Activated T-helper 1 cell treated with anti-CD3 and anti-CD28 coated beads, Interleukin-12 subunit alpha, Interleukin-12 subunit beta, Interleukin-2, Interleukin-4 antibody, amounts not matched to agents 30 ng/mL and 10 ng/mL and 1 ng/mL, durations not matched to agents 14 hours and 24 hours and 36 hours (primary cell): ENCODE measurements at regions of chr3 and their contacts with region 1.

Region 1: DNA sequence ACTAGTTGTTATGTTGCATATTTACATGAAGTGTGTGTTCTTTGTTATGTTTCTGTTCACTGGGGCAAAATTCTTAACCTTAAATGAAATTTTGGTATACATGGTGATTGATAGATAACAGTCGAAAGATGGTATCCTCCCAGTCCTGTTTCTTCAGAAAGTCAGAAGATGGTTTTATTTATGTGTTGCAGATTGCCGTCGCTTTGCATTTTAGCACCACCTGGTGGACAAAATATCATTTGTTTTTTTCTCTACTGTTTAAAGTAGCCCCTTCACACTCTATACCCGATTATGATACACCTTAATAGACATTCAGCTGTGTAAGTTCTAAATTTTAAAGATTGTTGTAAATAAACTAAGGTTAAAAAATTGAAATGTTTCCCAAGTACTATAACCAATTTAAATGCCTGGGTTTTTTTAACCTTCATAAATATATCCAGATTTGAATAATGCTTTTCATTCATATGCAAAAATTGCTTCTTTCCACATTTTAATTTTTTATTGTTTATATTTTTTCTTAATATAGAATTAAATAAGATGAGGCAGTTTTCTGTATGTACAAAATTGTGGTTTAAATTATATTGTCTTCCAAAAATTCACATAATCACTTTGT is 152.2 kb downstream of the ALCAM start:
- DNase-seq: peak; percentile 11
- H3K4me3 Mint-ChIP-seq: no peak overlapping the region
- H3K27ac Mint-ChIP-seq: no peak overlapping the region
- H3K4me1 Mint-ChIP-seq: no peaks in the 10 kb centered on the region
- H3K27me3 Mint-ChIP-seq: no peaks in the 10 kb centered on the region

Region 2: DNA sequence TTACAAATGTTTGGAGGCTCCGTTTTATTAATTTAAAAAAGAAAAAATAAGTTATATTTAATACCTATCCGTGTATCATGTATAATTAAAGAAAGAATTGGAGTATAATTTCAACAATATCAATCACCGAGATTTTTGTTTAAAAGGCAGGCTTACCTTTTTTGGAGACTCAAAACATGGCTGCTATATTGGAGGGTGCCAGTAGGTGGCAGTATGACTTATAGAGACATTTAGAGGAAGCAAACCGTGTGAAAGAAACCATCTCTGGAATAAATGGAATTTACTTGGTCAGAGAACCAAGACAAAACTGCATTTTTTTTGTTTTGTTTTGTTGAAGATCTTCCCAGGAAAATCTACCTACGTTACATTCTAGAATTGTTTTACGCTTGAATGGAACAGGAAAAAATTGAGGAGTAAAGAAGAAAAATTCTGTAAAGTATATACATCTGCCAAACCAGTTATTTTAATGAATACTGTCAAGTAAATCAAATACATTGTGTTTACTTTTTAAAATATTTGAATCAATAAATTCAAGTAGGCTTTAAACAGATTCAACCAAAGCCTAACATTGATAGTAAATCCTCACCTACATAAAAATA is 954.8 kb before region 1 on chr3:
- intact Hi-C with region 1: loop called (anchors 2 kb)
- DNase-seq: peak; percentile 24
- H3K4me3 Mint-ChIP-seq: no peak overlapping the region
- H3K27ac Mint-ChIP-seq: no peak overlapping the region
- H3K4me1 Mint-ChIP-seq: no peaks in the 10 kb centered on the region
- H3K27me3 Mint-ChIP-seq: no peaks in the 10 kb centered on the region

Region 3: GRCh38 chr3:104596551-104596950 is 922.4 kb before region 1 on chr3:
- intact Hi-C with region 1: loop called (anchors 2 kb)
- DNase-seq: no peak
- H3K4me3 Mint-ChIP-seq: no peak overlapping the region
- H3K27ac Mint-ChIP-seq: no peak overlapping the region
- H3K4me1 Mint-ChIP-seq: no peaks in the 10 kb centered on the region
- H3K27me3 Mint-ChIP-seq: no peaks in the 10 kb centered on the region

Region 4: GRCh38 chr3:105798381-105798934 is 279.5 kb after region 1 on chr3:
- intact Hi-C with region 1: no loop called
- DNase-seq: no peak
- H3K4me3 Mint-ChIP-seq: peak overlapping the region; percentile 50
- H3K27ac Mint-ChIP-seq: peak overlapping the region; percentile 57
- H3K4me1 Mint-ChIP-seq: peaks cover 72% of the 10 kb centered on the region
- H3K27me3 Mint-ChIP-seq: no peaks in the 10 kb centered on the region

Region 5: GRCh38 chr3:107064445-107065060 is 1545.6 kb after region 1 on chr3:
- intact Hi-C with region 1: loop called (anchors 2 kb)
- DNase-seq: peak; percentile 29
- H3K4me3 Mint-ChIP-seq: no peak overlapping the region
- H3K27ac Mint-ChIP-seq: no peak overlapping the region
- H3K4me1 Mint-ChIP-seq: peaks cover 24% of the 10 kb centered on the region
- H3K27me3 Mint-ChIP-seq: peaks cover 5% of the 10 kb centered on the region